Activated CD8-positive, alpha-beta T cell treated with anti-CD3 and anti-CD28 coated beads for 36 hours (primary cell): ENCODE measurements at regions of chr14 and their contacts with region 1.

Region 1: GRCh38 chr14:50342221-50343078 is 30.3 kb downstream of the DMAC2L start:
- DNase-seq: peak; percentile 79
- ATAC-seq: peak; percentile 29
- H3K4me3 Mint-ChIP-seq: no peak overlapping the region
- H3K27ac Mint-ChIP-seq: no peak overlapping the region
- H3K4me1 Mint-ChIP-seq: peaks cover 26% of the 10 kb centered on the region
- H3K27me3 Mint-ChIP-seq: no peaks in the 10 kb centered on the region
- CTCF ChIP-seq: peak; percentile 29

Region 2: GRCh38 chr14:50363714-50364111 is 21.3 kb after region 1 on chr14:
- CTCF ChIA-PET with region 1: interaction called, 14 read pairs
- POLR2A ChIA-PET with region 1: interaction called, 6 read pairs
- intact Hi-C with region 1: no loop called
- DNase-seq: peak; percentile 65
- ATAC-seq: peak; percentile 92
- H3K4me3 Mint-ChIP-seq: peak overlapping the region; percentile 79
- H3K27ac Mint-ChIP-seq: peak overlapping the region; percentile 89
- H3K4me1 Mint-ChIP-seq: peaks cover 29% of the 10 kb centered on the region
- H3K27me3 Mint-ChIP-seq: no peaks in the 10 kb centered on the region
- CTCF ChIP-seq: no peak

Region 3: GRCh38 chr14:50417853-50418252 is 75.4 kb after region 1 on chr14:
- CTCF ChIA-PET with region 1: no interaction called
- POLR2A ChIA-PET with region 1: no interaction called
- intact Hi-C with region 1: no loop called
- DNase-seq: no peak
- ATAC-seq: no peak
- H3K4me3 Mint-ChIP-seq: no peak overlapping the region
- H3K27ac Mint-ChIP-seq: no peak overlapping the region
- H3K4me1 Mint-ChIP-seq: peaks cover 5% of the 10 kb centered on the region
- H3K27me3 Mint-ChIP-seq: no peaks in the 10 kb centered on the region
- CTCF ChIP-seq: no peak

Region 4: GRCh38 chr14:50532502-50533240 is 190.2 kb after region 1 on chr14 and contains the start of gene MAP4K5:
- CTCF ChIA-PET with region 1: interaction called, 6 read pairs
- POLR2A ChIA-PET with region 1: interaction called, 4 read pairs
- intact Hi-C with region 1: loop called (anchors 2 kb)
- DNase-seq: peak; percentile 92
- ATAC-seq: peak; percentile 97
- H3K4me3 Mint-ChIP-seq: peak within 1 kb of the TSS; percentile 93
- H3K27ac Mint-ChIP-seq: peak within 1 kb of the TSS; percentile 89
- H3K4me1 Mint-ChIP-seq: peaks cover 38% of the 10 kb centered on the region
- H3K27me3 Mint-ChIP-seq: no peaks in the 10 kb centered on the region
- CTCF ChIP-seq: peak; percentile 90
- total RNA-seq, gene MAP4K5: 26.2 to 28.1 TPM